ENCODE measurements at regions of chr3 and their contacts with region 1.

Region 1: GRCh38 chr3:18080198-18080689 is 337.8 kb upstream of the TBC1D5 start:
- DNase-seq: peak; percentile 40
- ATAC-seq: peak; percentile 77
- H3K4me3 ChIP-seq: no peak overlapping the region
- H3K27ac ChIP-seq: no peak overlapping the region
- H3K4me1 ChIP-seq: peaks cover 18% of the 10 kb centered on the region
- H3K27me3 ChIP-seq: no peaks in the 10 kb centered on the region
- CTCF ChIP-seq: no peak

Region 2: GRCh38 chr3:17994167-17994566 is 86.1 kb before region 1 on chr3:
- CTCF ChIA-PET with region 1: no interaction called
- POLR2A ChIA-PET with region 1: no interaction called
- intact Hi-C with region 1: loop called (anchors 5 kb)
- DNase-seq: no peak
- ATAC-seq: no peak
- H3K4me3 ChIP-seq: no peak overlapping the region
- H3K27ac ChIP-seq: no peak overlapping the region
- H3K4me1 ChIP-seq: no peaks in the 10 kb centered on the region
- H3K27me3 ChIP-seq: no peaks in the 10 kb centered on the region
- CTCF ChIP-seq: no peak